PC-3 (cell line): ENCODE measurements at regions of chr19 and their contacts with region 1.

Region 1: GRCh38 chr19:40798223-40798996 is 581 bp upstream of the EGLN2 start:
- DNase-seq: peak; percentile 96
- ATAC-seq: peak; percentile 82
- H3K4me3 ChIP-seq: peak overlapping the region; percentile 78
- H3K27ac ChIP-seq: peak overlapping the region; percentile 41
- H3K4me1 ChIP-seq: peaks cover 34% of the 10 kb centered on the region
- H3K27me3 ChIP-seq: no peaks in the 10 kb centered on the region
- CTCF ChIP-seq: peak; percentile 47

Region 2: DNA sequence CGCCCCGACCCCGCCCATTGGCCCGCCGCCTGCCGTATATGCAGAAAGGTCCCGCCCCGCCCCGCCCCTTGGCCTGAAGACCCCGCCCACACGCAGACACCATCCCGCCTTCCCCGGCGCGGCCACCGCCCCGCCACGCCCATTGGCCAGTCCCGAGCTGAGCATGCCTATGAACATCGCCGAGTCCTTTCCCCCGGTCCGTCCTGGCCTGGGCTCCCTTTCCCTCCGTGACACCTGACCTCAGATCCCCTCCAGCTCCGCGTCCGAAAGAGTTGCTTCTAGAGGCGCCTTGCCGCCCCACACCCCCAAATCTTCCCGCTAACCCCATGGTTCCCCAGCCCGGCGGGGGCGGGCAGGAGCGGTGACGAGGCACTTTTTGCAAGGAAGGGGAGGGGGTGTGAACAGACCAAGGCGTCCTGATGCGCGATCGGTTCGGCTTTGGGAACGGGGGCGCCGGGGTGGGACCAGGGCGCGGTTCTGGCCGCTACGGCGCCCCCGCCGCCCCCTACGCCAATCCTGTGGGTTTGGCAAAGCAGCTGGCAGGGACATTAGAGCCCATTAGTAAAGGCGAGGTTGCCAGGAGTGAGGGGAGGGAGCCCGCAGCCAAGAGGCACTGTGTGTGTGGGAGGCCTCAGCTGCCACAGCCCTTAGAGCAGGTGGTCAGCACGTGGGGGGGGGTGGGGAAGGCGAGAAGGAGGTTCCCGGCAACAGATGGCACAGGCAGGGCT is 107.6 kb before region 1 on chr19:
- CTCF ChIA-PET with region 1: no interaction called
- POLR2A ChIA-PET with region 1: interaction called, 17 read pairs
- intact Hi-C with region 1: no loop called
- DNase-seq: peak; percentile 78
- ATAC-seq: peak; percentile 91
- H3K4me3 ChIP-seq: peak overlapping the region; percentile 81
- H3K27ac ChIP-seq: peak overlapping the region; percentile 84
- H3K4me1 ChIP-seq: peaks cover 24% of the 10 kb centered on the region
- H3K27me3 ChIP-seq: no peaks in the 10 kb centered on the region
- CTCF ChIP-seq: no peak

Region 3: GRCh38 chr19:40701758-40702157 is 96.7 kb before region 1 on chr19:
- CTCF ChIA-PET with region 1: no interaction called
- POLR2A ChIA-PET with region 1: no interaction called
- intact Hi-C with region 1: no loop called
- DNase-seq: no peak
- ATAC-seq: no peak
- H3K4me3 ChIP-seq: no peak overlapping the region
- H3K27ac ChIP-seq: no peak overlapping the region
- H3K4me1 ChIP-seq: no peaks in the 10 kb centered on the region
- H3K27me3 ChIP-seq: no peaks in the 10 kb centered on the region
- CTCF ChIP-seq: no peak

Region 4: DNA sequence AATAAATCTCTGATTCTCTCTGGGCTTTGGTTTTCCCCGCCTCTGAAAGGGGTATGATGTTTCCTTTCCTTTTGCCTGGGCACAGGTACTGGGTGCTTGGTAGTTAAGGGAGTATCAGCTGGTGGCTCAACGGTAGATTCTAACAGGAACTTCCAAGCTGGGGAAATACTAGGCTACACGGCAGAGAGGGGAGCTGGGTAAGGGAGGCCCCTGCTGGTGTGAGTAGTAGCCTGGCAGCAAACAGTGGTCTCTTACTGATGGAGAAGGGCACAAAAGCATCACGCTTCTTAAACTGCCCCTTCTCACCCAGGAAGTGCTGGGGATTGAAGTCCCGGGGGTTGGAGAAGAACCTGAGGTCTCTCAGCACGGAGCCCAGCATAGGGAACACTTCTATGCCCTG is 110.6 kb after region 1 on chr19:
- CTCF ChIA-PET with region 1: no interaction called
- POLR2A ChIA-PET with region 1: no interaction called
- intact Hi-C with region 1: loop called (anchors 1 kb)
- DNase-seq: peak; percentile 58
- ATAC-seq: peak; percentile 81
- H3K4me3 ChIP-seq: no peak overlapping the region
- H3K27ac ChIP-seq: no peak overlapping the region
- H3K4me1 ChIP-seq: peaks cover 11% of the 10 kb centered on the region
- H3K27me3 ChIP-seq: no peaks in the 10 kb centered on the region
- CTCF ChIP-seq: peak; percentile 66